ENCODE measurements at regions of chr3 and their contacts with region 1.

Region 1: GRCh38 chr3:12934431-12934830 is 93.1 kb upstream of the RPL32 start:
- DNase-seq: peak; percentile 69 to 77
- ATAC-seq: peak; percentile 20 to 59 (median 42)
- H3K4me3 ChIP-seq: peak overlapping the region; percentile 18
- H3K27ac ChIP-seq: peak overlapping the region; percentile 91
- H3K4me1 ChIP-seq: peaks cover 72% of the 10 kb centered on the region
- H3K27me3 ChIP-seq: no peaks in the 10 kb centered on the region
- CTCF ChIP-seq: no peak

Region 2: GRCh38 chr3:12967606-12968351 is 33.3 kb after region 1 on chr3:
- intact Hi-C with region 1: loop called in 1 of 2 experiments (anchors 5 kb)
- DNase-seq: peak; percentile 91 to 97
- ATAC-seq: peak; percentile 83 to 91 (median 88)
- H3K4me3 ChIP-seq: peak overlapping the region; percentile 98
- H3K27ac ChIP-seq: peak overlapping the region; percentile 93
- H3K4me1 ChIP-seq: peaks cover 77% of the 10 kb centered on the region
- H3K27me3 ChIP-seq: no peaks in the 10 kb centered on the region
- CTCF ChIP-seq: no peak

Region 3: GRCh38 chr3:12984023-12984823 is 49.8 kb after region 1 on chr3:
- intact Hi-C with region 1: loop called (anchors 5 kb)
- DNase-seq: peak; percentile 70 to 78
- ATAC-seq: peak; percentile 84 to 92 (median 86)
- H3K4me3 ChIP-seq: no peak overlapping the region
- H3K27ac ChIP-seq: peak overlapping the region; percentile 36
- H3K4me1 ChIP-seq: peaks cover 31% of the 10 kb centered on the region
- H3K27me3 ChIP-seq: no peaks in the 10 kb centered on the region
- CTCF ChIP-seq: peak; percentile 80

Region 4: DNA sequence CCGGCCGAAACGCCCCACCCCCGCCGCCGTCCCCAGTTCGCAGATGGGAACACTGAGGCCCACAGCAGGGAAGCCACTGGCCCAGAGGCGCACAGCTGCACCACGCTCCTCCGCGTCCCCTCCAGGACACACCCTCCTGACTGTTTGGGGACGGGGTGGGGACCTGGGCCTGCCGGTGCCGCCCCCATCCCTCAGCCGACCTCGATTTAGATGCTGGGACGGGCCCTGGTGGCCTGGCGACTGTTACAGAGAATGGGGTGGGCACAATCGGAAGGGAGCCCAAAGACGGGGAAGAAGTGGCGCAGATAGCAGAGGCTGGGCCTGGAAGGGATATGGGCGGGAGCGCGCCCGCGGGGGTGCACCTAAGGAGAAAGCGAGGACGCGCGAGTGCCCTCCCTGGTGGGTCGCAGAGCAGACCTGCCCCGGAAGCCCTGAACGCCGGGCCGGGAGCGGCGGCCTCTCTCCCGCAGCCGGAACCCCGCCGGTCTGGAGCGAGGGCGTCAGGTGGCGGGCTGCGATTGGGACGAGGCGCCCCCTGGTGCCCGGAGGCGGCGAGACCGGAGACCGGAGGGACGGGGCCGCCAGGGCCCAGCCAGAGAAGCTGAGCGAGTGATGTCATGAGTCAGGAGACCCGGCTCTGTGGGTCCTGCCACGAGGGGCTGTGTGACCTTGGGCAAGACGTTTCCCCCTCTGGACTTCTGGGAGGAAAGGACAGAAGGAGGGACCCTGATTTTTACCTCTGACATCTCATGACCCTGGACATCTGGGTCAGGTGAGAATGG is 60.4 kb after region 1 on chr3:
- intact Hi-C with region 1: no loop called
- DNase-seq: peak; percentile 91 to 95
- ATAC-seq: peak; percentile 81 to 87 (median 85)
- H3K4me3 ChIP-seq: peak overlapping the region; percentile 72
- H3K27ac ChIP-seq: peak overlapping the region; percentile 91
- H3K4me1 ChIP-seq: peaks cover 13% of the 10 kb centered on the region
- H3K27me3 ChIP-seq: no peaks in the 10 kb centered on the region
- CTCF ChIP-seq: peak; percentile 91

Region 5: GRCh38 chr3:13125092-13126015 is 190.9 kb after region 1 on chr3:
- intact Hi-C with region 1: no loop called
- DNase-seq: no peak
- ATAC-seq: no peak
- H3K4me3 ChIP-seq: no peak overlapping the region
- H3K27ac ChIP-seq: no peak overlapping the region
- H3K4me1 ChIP-seq: no peaks in the 10 kb centered on the region
- H3K27me3 ChIP-seq: no peaks in the 10 kb centered on the region
- CTCF ChIP-seq: no peak

Region 6: GRCh38 chr3:13166243-13167063 is 232.0 kb after region 1 on chr3:
- intact Hi-C with region 1: no loop called
- DNase-seq: no peak
- ATAC-seq: no peak
- H3K4me3 ChIP-seq: no peak overlapping the region
- H3K27ac ChIP-seq: no peak overlapping the region
- H3K4me1 ChIP-seq: no peaks in the 10 kb centered on the region
- H3K27me3 ChIP-seq: no peaks in the 10 kb centered on the region
- CTCF ChIP-seq: no peak

Measured in psoas muscle (tissue), 8 donors.